HEK293 (cell line): ENCODE measurements at regions of chr7 and their contacts with region 1.

Region 1: DNA sequence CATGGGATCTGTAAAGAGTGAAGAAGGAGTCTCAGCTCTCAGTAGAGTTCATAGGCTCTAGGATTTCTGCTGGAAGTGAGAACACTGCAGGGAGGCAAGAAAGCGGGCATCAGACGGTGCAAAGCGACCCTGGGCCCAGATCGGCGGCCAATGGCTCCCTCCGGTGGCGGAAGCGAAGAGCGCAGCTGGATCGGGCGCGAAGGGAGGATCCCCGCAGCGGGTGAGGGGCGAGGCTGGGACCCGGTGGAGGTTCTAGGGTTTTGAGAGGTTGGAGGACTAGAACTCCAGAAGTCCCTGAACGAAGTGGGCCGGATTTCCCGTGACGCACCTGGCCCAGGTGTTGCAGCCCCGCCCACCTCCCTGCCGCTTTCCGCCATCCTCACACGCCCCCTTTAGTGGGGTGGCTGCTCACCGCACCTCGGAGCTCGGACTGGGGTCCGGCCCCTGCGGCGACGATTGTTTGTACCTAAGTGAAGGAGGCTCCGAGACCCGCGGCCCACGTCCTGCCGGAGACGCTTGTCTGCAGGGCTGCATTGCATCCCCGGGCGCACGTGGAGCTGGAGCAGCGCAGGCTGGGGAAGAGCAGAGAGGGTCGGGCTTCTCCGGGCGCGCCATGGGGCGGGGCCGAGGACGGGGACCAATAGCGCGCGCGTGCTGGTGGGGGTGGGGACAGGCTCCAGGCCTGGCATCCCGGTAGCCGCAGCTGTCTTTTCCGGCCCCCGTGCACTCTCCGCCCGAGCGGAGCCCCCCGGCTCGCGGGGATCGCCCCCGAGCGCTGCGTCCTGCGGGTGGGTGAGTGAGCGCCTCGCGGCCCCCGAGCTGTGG is at the start of gene SLC12A9:
- H3K4me3 ChIP-seq: peak within 1 kb of the TSS; percentile 59
- H3K27ac ChIP-seq: peak within 1 kb of the TSS; percentile 54; the same call in 1 of the 2 replicates
- H3K4me1 ChIP-seq: peaks cover 3% of the 10 kb centered on the region; the same call in 1 of the 2 replicates
- CTCF ChIP-seq: peak; percentile 95

Region 2: GRCh38 chr7:100642534-100642907 is 209.7 kb before region 1 on chr7:
- CTCF ChIA-PET with region 1: no interaction called
- POLR2A ChIA-PET with region 1: no interaction called
- H3K4me3 ChIP-seq: no peak overlapping the region
- H3K27ac ChIP-seq: no peak overlapping the region
- H3K4me1 ChIP-seq: no peaks in the 10 kb centered on the region
- CTCF ChIP-seq: no peak

Region 3: DNA sequence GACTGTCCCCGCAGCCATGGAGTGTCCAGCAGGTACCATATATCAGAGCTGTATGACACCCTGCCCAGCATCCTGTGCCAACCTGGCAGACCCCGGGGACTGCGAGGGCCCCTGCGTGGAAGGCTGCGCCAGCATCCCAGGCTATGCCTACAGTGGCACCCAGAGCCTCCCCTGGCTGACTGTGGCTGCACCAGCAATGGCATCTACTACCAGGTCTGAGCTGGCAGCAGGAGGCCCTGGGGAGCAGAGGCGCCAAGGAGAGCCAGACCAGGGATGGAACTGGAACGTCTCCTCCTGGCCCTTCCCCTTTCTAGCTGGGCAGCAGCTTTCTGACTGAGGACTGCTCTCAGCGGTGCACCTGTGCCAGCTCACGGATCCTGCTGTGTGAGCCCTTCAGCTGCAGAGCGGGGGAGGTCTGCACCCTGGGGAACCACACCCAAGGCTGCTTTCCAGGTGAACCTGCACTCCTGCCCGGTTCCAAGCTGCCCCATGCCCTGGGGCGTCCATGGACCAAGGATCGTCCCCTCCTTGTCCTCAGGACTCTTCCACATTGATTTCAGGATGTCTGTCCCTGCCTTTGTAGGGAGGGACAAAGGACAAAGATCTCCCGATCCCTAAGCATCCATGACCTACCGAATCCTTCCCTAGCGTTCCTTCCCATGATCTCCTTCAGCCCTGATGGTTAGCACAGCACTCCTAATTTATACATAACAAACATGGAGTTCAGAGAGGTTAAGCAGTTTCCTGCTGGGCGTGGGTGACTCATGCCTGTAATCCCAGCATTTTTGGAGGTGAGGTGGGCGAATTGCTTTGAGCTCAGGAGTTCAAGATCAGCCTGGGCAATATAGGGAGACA is 58.2 kb before region 1 on chr7:
- CTCF ChIA-PET with region 1: interaction called, 95 read pairs
- POLR2A ChIA-PET with region 1: interaction called, 10 read pairs
- H3K4me3 ChIP-seq: no peak overlapping the region
- H3K27ac ChIP-seq: no peak overlapping the region
- H3K4me1 ChIP-seq: peaks cover 8% of the 10 kb centered on the region
- CTCF ChIP-seq: no peak

Region 4: DNA sequence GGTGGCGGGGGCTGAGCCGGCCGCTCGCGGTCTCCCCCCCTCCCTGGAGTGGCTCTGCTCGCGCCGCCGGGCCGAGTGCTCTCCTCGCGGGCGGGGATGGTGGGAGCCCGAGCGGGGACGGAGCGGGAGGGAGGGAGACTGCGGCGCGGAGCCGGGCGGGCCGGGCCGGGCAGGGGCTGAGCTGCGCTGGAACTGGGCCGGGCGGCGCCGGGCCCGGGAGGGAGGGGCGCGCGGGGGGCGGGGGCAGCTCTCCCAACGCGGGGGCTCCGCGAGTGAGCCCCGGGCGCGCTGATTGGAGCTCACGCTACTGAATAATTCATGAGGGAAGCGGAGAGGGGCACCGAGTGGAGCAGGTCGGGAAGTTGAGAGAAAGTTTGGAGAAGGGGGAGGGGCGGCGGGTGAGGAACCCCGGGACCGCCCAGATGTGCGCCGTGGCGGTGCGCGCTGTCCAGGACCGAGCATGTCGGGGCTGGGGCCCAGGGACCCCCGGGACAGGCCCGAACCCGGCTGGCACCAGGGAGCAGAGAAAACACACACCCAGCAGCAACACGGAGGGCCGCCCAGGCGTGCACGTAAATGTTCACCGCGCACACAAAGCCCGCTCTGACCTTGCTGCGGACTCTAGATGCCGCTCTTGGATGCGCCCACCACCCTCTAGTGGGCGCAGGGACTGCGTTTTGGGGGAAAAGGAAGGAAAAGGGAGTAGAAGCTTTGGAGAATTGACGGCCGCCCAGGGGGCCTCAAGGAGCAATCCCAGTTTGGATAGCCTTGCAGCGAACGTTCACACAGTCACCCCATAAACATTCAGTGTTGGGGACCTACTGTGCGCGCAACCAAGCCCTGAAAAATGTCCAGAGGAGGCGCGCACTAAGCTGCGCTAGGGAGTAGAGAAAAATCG is 24.7 kb before region 1 on chr7 and contains the start of gene EPHB4:
- CTCF ChIA-PET with region 1: interaction called, 13 read pairs
- POLR2A ChIA-PET with region 1: interaction called, 7 read pairs
- H3K4me3 ChIP-seq: peak within 1 kb of the TSS; percentile 82
- H3K27ac ChIP-seq: peak within 1 kb of the TSS; percentile 91; the same call in 1 of the 2 replicates
- H3K4me1 ChIP-seq: no peaks in the 10 kb centered on the region
- CTCF ChIP-seq: peak; percentile 98

Region 5: DNA sequence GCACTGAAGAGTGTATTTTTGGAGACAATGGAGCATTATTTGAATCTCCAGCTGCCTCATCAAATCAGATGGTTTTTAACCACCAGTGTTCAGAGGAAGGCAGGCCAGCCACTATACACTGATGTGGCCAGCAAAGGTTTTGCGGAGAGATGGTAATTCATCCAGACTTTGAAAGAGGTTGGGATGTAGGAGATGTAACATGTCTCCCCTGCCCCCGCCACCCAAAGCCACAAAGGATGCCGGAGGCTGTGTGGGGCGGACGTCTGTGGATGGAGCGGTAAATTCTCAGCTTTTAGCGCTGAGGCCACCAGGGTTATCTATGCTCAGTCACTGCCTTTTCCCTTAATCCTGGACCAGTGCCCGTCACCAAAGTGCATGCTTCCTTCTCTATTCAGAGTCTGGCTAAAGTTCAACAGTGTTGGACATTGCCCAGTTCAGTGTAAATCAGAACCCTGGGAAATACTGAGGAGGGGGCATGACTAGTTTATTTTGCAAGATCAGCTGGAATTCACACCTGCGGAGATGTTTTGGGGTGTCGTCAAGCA is 11.2 kb after region 1 on chr7:
- CTCF ChIA-PET with region 1: interaction called, 10 read pairs
- POLR2A ChIA-PET with region 1: interaction called, 6 read pairs
- H3K4me3 ChIP-seq: no peak overlapping the region
- H3K27ac ChIP-seq: no peak overlapping the region
- H3K4me1 ChIP-seq: no peaks in the 10 kb centered on the region; the same call in 1 of the 2 replicates
- CTCF ChIP-seq: no peak

Region 6: DNA sequence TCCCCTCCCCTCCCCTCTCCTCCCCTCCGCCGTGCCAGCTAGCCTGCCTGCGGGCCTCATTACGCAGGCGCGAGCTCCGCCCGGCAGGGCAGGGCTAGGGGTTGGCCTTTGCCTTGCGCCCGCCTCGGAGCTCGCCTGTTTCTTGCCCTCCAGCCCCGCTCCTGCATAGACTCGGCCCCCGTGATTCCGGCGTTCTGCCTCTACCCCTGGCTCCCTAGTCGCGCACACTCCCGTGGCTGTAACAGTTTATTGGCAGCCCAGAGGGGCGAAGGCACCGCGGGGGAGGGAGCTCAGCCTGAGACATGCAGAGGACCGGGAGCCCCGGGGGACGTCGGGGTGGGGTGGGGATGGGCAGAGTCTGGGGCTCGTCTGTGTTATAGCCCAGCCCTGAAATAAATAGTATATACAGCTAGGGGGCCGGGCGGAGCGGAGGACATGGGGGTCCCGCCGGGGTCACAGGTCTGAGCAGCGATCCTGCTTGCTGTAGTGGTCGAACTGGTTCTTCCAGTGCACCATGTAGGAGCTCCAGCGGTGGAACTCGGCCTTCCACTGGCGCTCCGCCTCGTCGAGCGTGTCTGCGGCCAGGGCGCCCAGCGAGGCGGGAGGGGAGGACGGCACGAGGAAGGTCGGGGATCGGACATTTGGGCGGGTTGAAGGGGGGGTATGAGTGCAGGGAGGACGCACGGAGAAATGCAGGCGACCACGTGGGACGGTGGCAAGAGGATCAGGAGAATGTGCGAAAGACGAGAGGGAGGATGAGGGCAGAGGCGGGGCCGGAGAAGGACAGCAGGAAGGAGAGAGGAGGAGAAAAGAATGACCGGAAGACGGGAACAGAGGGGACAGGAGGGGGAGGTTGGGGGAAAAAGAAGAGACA is 37.7 kb after region 1 on chr7:
- CTCF ChIA-PET with region 1: interaction called, 4 read pairs
- POLR2A ChIA-PET with region 1: interaction called, 10 read pairs
- H3K4me3 ChIP-seq: peak overlapping the region; percentile 48
- H3K27ac ChIP-seq: peak overlapping the region; percentile 37; the same call in 1 of the 2 replicates
- H3K4me1 ChIP-seq: peaks cover 4% of the 10 kb centered on the region; the same call in 1 of the 2 replicates
- CTCF ChIP-seq: peak; percentile 35; the same call in 1 of the 2 replicates